HepG2 (cell line): ENCODE measurements at regions of chr2 and their contacts with region 1.

Region 1: GRCh38 chr2:70948337-70949003 is 12.8 kb downstream of the ATP6V1B1 start:
- DNase-seq: peak; percentile 67
- ATAC-seq: peak; percentile 93
- H3K4me3 ChIP-seq: peak overlapping the region; percentile 10 to 61 (median 53)
- H3K27ac ChIP-seq: no peak overlapping the region
- H3K4me1 ChIP-seq: peaks cover 34% of the 10 kb centered on the region
- H3K27me3 ChIP-seq: peaks cover 0 to 17% of the 10 kb centered on the region in 2 experiments; a peak in 3 of 5 replicates
- CTCF ChIP-seq: peak; percentile 98
- EP300 ChIP-seq: no peak
- POLR2A ChIP-seq: no peak
- RAD21 ChIP-seq: peak; percentile 79

Region 2: GRCh38 chr2:70871398-70872211 is 76.9 kb before region 1 on chr2:
- CTCF ChIA-PET with region 1: interaction called, 93 read pairs
- POLR2A ChIA-PET with region 1: interaction called, 3 read pairs
- in situ Hi-C with region 1: loop called (anchors 5 kb)
- intact Hi-C with region 1: loop called (anchors 1 kb)
- DNase-seq: peak; percentile 74
- ATAC-seq: peak; percentile 98
- H3K4me3 ChIP-seq: peak overlapping the region in 1 of 3 experiments; percentile 45; a peak in 1 of 6 replicates
- H3K27ac ChIP-seq: no peak overlapping the region
- H3K4me1 ChIP-seq: peaks cover 10% of the 10 kb centered on the region
- H3K27me3 ChIP-seq: no peaks in the 10 kb centered on the region; a peak in 1 of 5 replicates
- CTCF ChIP-seq: peak; percentile 100
- EP300 ChIP-seq: no peak
- POLR2A ChIP-seq: no peak
- RAD21 ChIP-seq: peak; percentile 99

Region 3: DNA sequence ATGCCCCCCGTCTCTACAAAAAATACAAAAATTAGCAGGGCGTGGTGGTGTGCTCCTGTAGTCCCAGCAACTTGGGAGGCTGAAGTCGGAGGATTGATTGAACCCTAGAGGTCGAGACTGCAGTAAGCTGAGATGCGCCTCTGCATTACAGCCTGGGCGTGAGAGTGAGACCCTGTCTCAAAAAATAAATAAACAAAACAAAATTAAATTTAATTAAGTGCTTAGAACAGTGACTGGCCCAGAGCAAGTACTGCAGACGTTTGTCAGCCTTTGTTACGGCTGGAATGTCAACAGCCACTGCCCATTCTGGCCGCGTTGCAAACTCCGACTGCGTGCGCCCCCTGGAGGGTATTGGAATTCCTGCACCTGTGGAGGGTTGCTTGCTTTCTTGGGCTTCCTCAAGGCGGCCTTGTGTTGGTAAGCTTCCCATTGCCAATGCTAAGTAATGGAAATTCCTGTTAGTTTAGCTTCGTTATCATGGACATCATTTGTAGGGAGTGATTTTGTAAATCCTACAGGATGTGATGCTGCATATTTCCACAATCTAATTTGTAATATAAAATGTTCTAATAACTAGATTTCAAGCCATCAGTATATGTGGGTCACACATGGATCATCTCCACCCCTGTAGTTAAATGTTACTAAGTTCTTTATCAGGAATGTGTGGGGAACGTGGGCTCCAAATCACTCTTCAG is 28.7 kb before region 1 on chr2:
- CTCF ChIA-PET with region 1: interaction called, 11 read pairs
- POLR2A ChIA-PET with region 1: no interaction called
- in situ Hi-C with region 1: no loop called
- intact Hi-C with region 1: loop called (anchors 2 kb)
- DNase-seq: peak; percentile 80
- ATAC-seq: peak; percentile 88
- H3K4me3 ChIP-seq: no peak overlapping the region
- H3K27ac ChIP-seq: no peak overlapping the region
- H3K4me1 ChIP-seq: peaks cover 22% of the 10 kb centered on the region
- H3K27me3 ChIP-seq: no peaks in the 10 kb centered on the region
- CTCF ChIP-seq: peak; percentile 97
- EP300 ChIP-seq: no peak
- POLR2A ChIP-seq: no peak
- RAD21 ChIP-seq: peak; percentile 95

Region 4: DNA sequence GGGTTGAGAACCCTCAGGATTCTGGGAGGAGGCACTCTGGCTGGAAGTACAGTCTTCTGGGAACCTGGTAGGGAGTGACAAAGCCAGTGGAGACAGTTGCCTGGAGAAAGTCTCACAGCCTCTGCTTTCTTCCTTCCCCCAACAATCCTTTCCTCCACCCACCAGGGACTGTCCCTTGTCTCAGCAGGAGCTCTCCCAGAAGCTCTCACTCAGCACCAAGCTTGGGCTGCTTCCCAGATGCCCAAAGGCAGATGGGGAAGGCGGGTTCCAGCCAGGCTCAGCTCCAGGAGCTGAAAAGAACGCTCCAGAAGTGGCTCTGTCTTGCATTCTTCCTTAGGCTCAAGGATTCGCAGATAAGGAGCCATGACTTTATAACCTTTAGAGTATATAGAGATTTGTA is 112.4 kb after region 1 on chr2:
- CTCF ChIA-PET with region 1: no interaction called
- POLR2A ChIA-PET with region 1: no interaction called
- in situ Hi-C with region 1: no loop called
- intact Hi-C with region 1: no loop called
- DNase-seq: no peak
- ATAC-seq: no peak
- H3K4me3 ChIP-seq: no peak overlapping the region
- H3K27ac ChIP-seq: no peak overlapping the region
- H3K4me1 ChIP-seq: peaks cover 15% of the 10 kb centered on the region
- H3K27me3 ChIP-seq: peaks cover 0 to 43% of the 10 kb centered on the region in 2 experiments; a peak in 4 of 5 replicates
- CTCF ChIP-seq: no peak
- EP300 ChIP-seq: no peak
- POLR2A ChIP-seq: no peak
- RAD21 ChIP-seq: no peak